Activated CD8-positive, alpha-beta T cell treated with anti-CD3 and anti-CD28 coated beads for 36 hours (primary cell): ENCODE measurements at regions of chr1 and their contacts with region 1.

Region 1: DNA sequence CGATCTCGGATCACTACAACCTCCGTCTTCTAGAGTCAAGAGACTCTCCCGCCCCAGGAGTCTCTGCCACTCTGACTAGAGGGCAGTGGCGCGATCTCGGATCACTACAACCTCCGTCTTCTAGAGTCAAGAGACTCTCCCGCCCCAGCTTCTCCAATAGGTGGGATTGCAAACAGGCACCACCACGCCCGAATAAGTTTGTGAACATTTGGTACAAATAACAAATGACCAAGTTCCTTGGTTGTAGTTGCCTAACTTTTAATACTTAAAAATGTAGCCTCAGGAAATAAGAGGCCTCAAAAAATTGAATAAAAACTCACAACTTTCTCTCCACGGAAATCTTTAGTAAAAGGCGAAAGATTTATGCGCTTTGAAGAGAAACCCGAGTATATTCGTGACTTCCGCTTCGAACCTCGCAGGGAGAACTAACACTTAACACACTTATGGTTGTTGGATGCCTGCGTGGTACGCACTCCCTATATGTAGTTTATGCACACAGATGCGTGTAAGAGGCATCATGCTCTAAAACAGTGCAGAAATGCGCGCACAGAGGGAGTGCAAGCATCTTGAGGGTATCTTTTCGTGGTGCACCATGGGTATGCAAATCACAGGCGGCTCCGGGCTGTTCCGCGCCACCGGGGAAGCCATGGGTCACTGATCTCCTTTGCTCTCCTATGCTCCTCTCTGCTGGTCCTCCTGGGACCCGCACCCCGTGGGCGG is 11.4 kb downstream of the BTBD19 start:
- DNase-seq: peak; percentile 93
- ATAC-seq: peak; percentile 91
- H3K4me3 Mint-ChIP-seq: peak overlapping the region; percentile 79
- H3K27ac Mint-ChIP-seq: peak overlapping the region; percentile 99
- H3K4me1 Mint-ChIP-seq: peaks cover 33% of the 10 kb centered on the region
- H3K27me3 Mint-ChIP-seq: no peaks in the 10 kb centered on the region
- CTCF ChIP-seq: no peak

Region 2: GRCh38 chr1:44786138-44786840 is 33.5 kb before region 1 on chr1:
- CTCF ChIA-PET with region 1: interaction called, 10 read pairs
- POLR2A ChIA-PET with region 1: interaction called, 126 read pairs
- intact Hi-C with region 1: loop called (anchors 5 kb)
- DNase-seq: peak; percentile 78
- ATAC-seq: peak; percentile 69
- H3K4me3 Mint-ChIP-seq: peak overlapping the region; percentile 65
- H3K27ac Mint-ChIP-seq: peak overlapping the region; percentile 82
- H3K4me1 Mint-ChIP-seq: peaks cover 33% of the 10 kb centered on the region
- H3K27me3 Mint-ChIP-seq: no peaks in the 10 kb centered on the region
- CTCF ChIP-seq: peak; percentile 100

Region 3: DNA sequence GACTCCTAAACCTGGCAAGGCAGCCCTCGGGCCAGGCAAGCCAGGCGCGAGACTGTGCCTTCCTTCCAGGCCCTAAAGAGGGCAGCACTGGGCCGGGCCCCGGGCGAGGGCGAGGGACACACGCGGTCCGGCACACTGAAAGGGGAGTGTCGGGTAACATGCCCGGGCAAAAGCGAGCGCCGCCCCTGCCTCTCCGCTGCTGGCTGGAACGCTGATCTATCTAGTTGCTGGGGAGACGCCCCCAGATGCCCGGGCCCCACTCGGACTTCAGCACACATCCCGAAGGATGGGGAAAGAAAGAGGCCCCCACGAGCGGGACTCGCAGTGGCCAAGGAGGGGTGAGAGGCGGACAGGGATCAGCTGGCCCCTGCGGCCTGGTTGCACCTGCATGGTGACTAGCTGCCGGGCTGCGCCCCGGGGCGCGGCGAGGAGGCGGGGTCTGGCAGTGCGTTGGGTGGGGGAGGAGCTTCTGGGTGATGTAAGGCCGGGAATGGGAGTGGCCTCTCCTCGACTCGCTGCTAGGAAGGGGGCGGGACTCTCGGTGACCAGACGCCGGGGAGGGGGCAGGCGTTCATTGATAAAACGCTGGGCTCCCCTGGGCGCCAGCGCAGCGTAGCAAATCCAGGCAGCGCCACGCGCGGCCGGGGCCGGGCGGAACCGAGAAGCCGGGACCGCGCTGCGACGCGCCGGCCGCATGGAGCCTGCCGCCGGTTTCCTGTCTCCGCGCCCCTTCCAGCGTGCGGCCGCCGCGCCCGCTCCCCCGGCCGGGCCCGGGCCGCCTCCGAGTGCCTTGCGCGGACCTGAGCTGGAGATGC is 19.8 kb before region 1 on chr1 and contains the start of gene PLK3:
- CTCF ChIA-PET with region 1: interaction called, 14 read pairs
- POLR2A ChIA-PET with region 1: interaction called, 214 read pairs
- intact Hi-C with region 1: no loop called
- DNase-seq: peak; percentile 99
- ATAC-seq: peak; percentile 90
- H3K4me3 Mint-ChIP-seq: peak within 1 kb of the TSS; percentile 84
- H3K27ac Mint-ChIP-seq: peak within 1 kb of the TSS; percentile 100
- H3K4me1 Mint-ChIP-seq: peaks cover 35% of the 10 kb centered on the region
- H3K27me3 Mint-ChIP-seq: no peaks in the 10 kb centered on the region
- CTCF ChIP-seq: peak; percentile 76
- total RNA-seq, gene PLK3: 36.4 to 36.6 TPM

Region 4: DNA sequence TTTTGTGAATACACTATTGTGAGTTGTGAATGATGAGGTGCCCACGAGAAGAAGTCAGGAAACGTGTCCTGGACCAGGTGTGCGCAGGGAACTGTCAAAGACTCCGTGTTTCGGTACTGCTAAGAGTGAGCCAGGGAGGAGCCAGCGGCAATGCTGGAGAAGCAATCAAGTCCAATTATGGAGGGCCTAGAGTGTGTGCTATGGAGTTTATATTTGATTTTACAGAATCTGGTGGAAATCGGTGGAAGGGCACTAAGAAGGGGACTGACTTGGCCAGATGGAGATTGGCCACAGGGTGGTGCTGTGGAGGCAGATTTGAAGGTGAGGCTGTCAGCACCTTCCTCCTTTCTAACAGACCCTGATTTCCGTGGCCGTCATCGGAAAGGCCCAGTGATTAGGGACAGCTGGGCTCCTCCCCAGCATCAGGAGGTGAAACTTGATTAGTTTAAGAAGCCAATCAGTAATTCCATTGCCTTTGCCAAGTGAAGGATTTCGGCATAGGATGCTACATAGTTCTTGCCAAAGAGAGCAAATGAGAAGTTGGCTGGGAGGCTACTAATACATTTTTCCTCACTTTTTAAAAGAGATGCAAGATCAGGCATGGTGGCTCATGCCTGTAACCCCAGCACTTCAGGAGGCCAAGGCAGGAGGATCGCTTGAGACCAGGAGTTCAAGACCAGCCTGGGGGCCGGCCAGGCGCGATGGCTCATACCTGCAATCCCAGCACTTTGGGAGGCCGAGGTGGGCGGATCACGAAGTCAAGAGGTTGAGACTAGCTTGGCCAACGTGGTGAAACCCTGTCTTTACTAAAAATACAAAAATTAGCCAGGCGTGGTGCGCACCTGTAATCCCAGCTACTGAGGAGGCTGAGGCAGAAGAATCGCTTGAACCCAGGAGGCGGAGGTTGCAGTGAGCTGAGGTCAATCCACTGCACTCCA is 16.2 kb after region 1 on chr1:
- CTCF ChIA-PET with region 1: interaction called, 14 read pairs
- POLR2A ChIA-PET with region 1: interaction called, 66 read pairs
- intact Hi-C with region 1: no loop called
- DNase-seq: peak; percentile 97
- ATAC-seq: peak; percentile 99
- H3K4me3 Mint-ChIP-seq: no peak overlapping the region
- H3K27ac Mint-ChIP-seq: peak overlapping the region; percentile 49
- H3K4me1 Mint-ChIP-seq: peaks cover 10% of the 10 kb centered on the region
- H3K27me3 Mint-ChIP-seq: no peaks in the 10 kb centered on the region
- CTCF ChIP-seq: peak; percentile 77

Region 5: DNA sequence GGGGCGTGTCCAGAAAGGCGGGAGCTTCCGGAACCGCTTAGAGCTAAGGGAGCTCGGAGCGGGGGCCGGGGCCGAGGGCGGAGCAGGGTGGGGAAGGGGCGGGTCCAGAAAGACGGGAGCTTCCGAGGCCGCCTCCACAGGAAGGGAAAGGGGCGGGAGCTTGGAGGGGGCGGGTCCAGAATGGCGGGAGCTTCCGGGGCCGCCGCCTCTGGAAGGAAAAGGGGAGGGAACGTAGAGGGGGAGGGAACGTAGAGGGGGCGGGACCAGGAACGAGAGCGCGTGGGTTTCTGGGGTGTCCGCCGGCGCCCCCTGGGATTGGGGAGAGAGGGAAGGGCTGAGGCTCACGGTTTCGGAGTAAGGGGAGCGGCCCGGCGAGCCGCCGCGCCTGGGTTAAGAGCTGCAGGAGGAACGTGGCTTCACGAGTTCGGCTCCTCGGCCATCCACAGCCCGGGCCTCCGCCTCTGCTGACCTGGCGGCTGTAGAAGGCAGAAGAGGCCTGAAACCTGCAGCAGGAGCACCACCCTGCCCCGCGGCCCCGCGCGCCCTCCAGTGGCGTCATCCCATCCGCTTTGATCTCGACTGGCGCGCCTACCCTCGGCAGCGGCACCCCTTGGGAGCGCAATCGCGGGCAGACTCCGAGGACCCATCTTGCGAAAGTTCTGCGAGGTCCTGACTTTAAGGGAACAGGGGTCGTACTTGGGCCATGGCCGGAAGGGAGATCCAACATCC is 484.0 kb after region 1 on chr1:
- CTCF ChIA-PET with region 1: no interaction called
- POLR2A ChIA-PET with region 1: interaction called, 10 read pairs
- intact Hi-C with region 1: no loop called
- DNase-seq: peak; percentile 100
- ATAC-seq: peak; percentile 84
- H3K4me3 Mint-ChIP-seq: peak overlapping the region; percentile 91
- H3K27ac Mint-ChIP-seq: peak overlapping the region; percentile 98
- H3K4me1 Mint-ChIP-seq: peaks cover 40% of the 10 kb centered on the region
- H3K27me3 Mint-ChIP-seq: no peaks in the 10 kb centered on the region
- CTCF ChIP-seq: peak; percentile 63